Ascending aorta (tissue), 2 donors: ENCODE measurements at regions of chr20 and their contacts with region 1.

Region 1: DNA sequence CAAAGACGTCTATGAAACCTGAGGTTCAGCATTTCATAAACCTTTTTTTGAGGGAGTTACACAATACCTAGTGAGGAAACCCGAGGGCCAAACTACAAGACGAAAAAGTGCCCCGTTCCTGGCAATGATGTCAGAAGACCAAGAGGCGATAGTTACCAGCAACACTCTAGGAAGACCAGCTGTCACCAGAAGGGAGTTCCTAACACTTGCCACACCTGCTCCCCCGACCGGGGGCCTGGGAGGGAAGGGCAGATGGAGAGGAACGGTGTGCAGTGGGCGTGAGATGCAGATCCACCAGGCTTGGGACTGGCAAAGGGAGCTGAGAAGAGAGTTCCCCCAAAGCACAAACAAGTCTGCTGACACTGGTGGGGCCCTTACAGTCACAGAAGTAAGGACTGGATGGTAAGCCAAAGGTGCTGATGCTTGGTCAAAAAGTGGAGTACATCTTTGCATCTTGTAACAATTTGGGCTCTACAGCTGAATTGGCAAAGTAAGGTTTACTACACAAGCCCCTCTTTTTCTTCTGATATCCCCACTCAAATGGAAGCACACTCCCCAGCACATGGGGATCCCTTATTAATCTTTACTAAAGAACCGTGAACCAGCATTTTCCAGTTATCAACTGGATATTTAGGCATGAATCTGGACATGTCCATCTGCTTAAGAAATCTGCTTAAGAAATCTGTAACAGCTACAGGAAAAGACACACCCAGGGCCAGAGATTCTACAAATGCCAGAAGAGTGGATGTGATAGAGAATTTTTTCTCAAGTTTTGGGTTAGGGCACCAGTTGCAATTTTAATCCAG is 38.5 kb downstream of the PANK2 start:
- DNase-seq: peak in 1 of 2 donors; percentile 71
- H3K4me3 ChIP-seq: no peak overlapping the region
- H3K27ac ChIP-seq: peak overlapping the region; percentile 23 to 32
- H3K4me1 ChIP-seq: peaks cover 9 to 42% of the 10 kb centered on the region in 2 donors
- H3K27me3 ChIP-seq: no peaks in the 10 kb centered on the region
- CTCF ChIP-seq: no peak

Region 2: GRCh38 chr20:3980260-3981131 is 52.8 kb after region 1 on chr20:
- intact Hi-C with region 1: loop called (anchors 5 kb)
- DNase-seq: no peak
- H3K4me3 ChIP-seq: peak overlapping the region; percentile 41 to 56
- H3K27ac ChIP-seq: peak overlapping the region; percentile 52 to 70
- H3K4me1 ChIP-seq: peaks cover 3 to 6% of the 10 kb centered on the region in 2 donors
- H3K27me3 ChIP-seq: no peaks in the 10 kb centered on the region
- CTCF ChIP-seq: no peak

Region 3: DNA sequence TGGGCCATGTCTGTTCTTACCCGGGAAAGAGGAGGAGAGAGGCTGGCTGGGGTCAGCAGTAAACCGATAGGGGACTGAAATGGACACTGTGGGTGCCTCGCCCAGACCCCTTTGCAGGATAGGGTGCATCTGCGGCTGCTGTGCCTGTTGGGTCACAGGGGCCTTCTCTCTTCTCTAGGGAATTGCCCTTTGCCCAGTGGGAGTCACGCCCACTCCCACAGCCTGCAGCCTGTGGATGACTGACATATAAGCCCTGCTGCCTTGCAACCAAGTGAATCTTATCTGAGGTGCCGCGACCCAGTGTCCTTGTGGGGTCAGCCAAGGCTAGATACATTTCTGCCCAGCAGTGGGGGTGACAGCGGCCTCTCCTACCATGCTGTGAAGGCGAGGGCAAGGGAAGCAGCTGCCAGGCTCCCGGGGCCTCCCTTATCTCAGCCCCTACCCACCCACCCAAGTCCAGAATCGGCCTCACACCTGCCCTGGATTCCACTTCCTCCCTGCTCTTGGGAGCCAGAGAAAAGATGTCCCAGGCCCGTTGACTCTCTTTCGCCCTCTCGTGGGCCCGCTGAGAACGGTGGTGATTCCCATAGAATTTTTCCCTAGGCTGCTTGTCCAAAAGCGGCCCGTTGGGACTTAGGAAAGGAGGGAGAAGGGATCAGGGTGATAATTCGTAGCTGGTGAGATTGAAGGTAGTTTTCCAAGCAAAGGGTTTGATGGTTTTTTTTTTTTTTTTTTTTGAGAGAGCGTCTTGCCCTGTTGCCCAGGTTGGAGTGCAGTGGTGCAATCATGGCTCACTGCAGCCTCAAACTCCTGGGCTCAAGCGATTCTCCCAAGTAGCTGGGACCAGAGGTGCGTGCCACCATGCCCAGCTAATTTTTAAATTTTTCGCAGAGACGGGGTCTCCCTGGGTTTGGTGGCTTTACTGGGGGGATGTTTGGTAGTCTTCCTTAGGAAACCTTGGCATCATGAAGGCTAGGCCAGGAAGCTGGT is 164.1 kb after region 1 on chr20:
- intact Hi-C with region 1: loop called (anchors 5 kb)
- DNase-seq: peak in 1 of 2 donors; percentile 81
- H3K4me3 ChIP-seq: no peak overlapping the region
- H3K27ac ChIP-seq: peak overlapping the region; percentile 57 to 82
- H3K4me1 ChIP-seq: peaks cover 0 to 13% of the 10 kb centered on the region in 2 donors
- H3K27me3 ChIP-seq: no peaks in the 10 kb centered on the region
- CTCF ChIP-seq: peak; percentile 56 to 81 (median 77)